Left lung (tissue), 14 donors: ENCODE measurements at regions of chr2 and their contacts with region 1.

Region 1: DNA sequence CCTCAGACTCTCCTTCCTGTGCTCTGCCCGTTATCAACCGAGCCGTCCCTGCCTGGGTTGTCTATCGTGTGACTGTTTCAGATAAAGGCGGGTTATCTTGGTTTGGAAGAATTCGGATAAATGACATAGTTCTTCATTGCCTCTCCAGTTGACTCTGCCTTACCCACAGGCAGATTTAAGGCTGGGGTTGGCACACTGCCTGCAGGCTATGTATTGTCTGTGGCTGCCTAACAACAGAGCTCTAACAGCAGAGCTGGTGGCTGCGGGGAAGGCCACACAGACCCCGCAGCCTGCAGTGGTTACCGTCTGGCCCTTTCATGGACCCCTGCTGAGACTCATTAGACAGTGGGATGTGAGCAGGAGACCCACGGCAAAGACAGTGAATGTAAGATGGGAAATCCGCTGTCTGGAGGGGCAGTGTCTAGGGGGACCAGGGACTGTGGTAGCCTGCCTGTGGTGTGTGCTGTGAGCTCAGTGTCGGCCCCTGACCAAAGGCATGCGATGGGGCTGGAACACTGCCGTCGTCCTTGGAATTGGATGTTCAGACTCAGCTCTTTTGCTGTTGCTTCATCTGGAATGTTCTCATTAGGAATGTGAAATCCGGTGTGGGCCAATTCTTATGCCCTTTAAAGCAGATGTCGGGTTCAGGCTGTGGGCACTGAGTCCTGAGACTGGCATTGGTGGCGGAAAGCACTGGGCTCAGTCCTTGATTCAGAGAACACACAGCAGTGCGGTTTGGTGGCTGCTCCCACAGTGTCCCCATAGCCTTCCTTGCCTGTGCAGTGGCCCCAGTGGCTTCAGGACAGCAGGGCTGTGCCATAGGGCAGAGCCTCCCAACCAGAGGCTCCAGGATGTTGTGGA is 44.5 kb downstream of the SH3RF3 start:
- DNase-seq: peak in 3 of 4 donors; percentile 51 to 74 (median 58)
- ATAC-seq: peak; percentile 52
- H3K4me3 ChIP-seq: no peak overlapping the region
- H3K27ac ChIP-seq: peak overlapping the region; percentile 70 to 73
- H3K4me1 ChIP-seq: peaks cover 43 to 48% of the 10 kb centered on the region in 2 donors
- H3K27me3 ChIP-seq: no peaks in the 10 kb centered on the region
- CTCF ChIP-seq: no peak

Region 2: DNA sequence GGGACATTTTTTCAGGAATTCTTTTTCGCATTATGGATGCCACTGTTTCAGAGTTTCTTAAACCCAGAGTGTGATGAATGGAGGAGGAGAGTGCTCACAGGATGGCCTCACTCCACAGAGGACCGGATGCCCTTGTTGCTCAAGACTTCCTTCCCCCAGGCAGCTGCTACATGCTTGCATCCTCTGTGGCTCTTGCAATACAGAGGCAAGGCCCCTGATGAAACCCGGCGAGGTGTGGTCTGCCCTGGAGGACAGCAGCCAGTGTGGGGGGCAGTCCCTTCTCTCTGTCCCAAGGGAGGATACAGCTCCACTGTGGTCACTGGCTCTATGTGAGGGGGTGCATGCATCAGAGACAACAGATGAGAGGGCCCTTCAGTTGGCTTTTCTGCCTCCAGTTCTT is 65.0 kb after region 1 on chr2:
- intact Hi-C with region 1: loop called in 1 of 2 experiments (anchors 10 kb)
- DNase-seq: peak in 3 of 4 donors; percentile 73 to 91 (median 85)
- ATAC-seq: peak; percentile 70
- H3K4me3 ChIP-seq: no peak overlapping the region
- H3K27ac ChIP-seq: peak overlapping the region; percentile 33 to 78
- H3K4me1 ChIP-seq: peaks cover 16 to 69% of the 10 kb centered on the region in 2 donors
- H3K27me3 ChIP-seq: no peaks in the 10 kb centered on the region
- CTCF ChIP-seq: no peak

Region 3: DNA sequence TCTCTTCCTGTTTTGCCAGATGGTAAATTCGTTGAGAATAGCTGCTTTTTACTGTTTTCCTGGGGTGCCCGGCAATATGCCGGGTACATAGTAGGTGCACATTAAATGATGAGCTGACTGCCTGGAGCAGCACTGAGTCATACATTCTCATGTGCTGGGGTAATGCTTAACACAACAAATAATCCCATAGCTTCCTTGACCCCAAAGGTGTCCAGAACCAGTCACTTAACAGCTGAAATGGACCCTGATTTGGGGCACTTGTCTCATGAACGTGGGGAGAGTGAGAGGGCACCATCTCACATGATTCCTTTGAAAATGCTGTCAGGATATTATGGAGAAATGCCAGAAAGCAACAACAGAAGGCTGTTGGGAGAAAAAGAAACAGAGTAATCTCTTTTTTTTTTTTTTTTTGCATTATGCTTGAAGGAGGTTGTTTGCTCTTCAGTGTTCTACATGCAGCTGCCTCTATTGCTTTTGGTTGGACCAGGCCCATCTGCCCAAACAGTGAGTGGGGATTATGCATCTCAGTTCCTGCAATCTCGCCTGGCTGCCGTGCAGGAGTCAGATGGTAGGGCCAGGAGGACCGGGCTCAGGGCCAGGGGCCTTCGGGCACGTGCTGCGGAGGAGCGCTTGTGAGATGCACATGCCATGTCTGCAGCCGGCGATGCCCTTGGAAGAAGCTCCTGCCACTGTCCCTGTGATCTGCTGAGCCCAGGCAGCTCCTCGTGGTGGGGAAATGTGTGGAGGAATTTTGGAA is 117.5 kb after region 1 on chr2:
- intact Hi-C with region 1: no loop called
- DNase-seq: no peak
- ATAC-seq: no peak
- H3K4me3 ChIP-seq: no peak overlapping the region
- H3K27ac ChIP-seq: no peak overlapping the region
- H3K4me1 ChIP-seq: peaks cover 0 to 3% of the 10 kb centered on the region in 2 donors
- H3K27me3 ChIP-seq: no peaks in the 10 kb centered on the region
- CTCF ChIP-seq: no peak